ENCODE measurements at regions of chr14 and their contacts with region 1.

Region 1: GRCh38 chr14:63276492-63277342 is 42.0 kb downstream of the GPHB5 start:
- DNase-seq: no peak
- H3K4me3 ChIP-seq: no peak overlapping the region
- H3K27ac ChIP-seq: no peak overlapping the region
- H3K4me1 ChIP-seq: peaks cover 0 to 5% (median 0%) of the 10 kb centered on the region in 4 donors
- H3K27me3 ChIP-seq: no peaks in the 10 kb centered on the region
- CTCF ChIP-seq: peak; percentile 65 to 81 (median 76)
- EP300 ChIP-seq: no peak
- POLR2A ChIP-seq: no peak

Region 2: GRCh38 chr14:62162998-62163589 is 1113.6 kb before region 1 on chr14:
- intact Hi-C with region 1: loop called (anchors 5 kb)
- DNase-seq: no peak
- H3K4me3 ChIP-seq: no peak overlapping the region
- H3K27ac ChIP-seq: no peak overlapping the region
- H3K4me1 ChIP-seq: no peaks in the 10 kb centered on the region
- H3K27me3 ChIP-seq: peaks cover 0 to 10% (median 0%) of the 10 kb centered on the region in 3 donors
- CTCF ChIP-seq: peak in 2 of 4 experiments; percentile 10 to 51
- EP300 ChIP-seq: no peak
- POLR2A ChIP-seq: no peak

Measured in sigmoid colon (tissue), 7 donors.